ENCODE measurements at regions of chr7 and their contacts with region 1.

Region 1: DNA sequence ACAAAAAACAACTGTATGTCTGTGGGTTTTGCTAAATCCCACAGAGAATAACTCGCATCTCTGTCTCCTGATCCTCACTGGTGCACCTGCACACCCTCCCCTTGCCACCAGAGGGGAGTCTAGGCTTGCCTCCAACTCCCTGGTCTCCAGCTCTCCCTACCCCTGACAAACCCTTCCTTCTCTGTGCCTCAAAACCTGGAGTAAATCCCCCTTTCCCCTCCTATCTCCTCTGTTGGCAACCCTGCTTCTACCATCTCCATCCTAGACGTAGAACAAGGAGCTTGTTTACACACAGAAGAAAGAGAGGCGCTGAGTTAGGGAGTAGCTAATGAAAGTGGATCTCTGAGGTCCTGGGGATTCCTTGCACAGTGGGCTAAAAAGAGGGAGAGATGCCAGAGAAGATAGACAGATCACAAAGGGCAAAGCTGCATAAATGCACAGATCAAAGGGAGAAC is 6.0 kb downstream of the MBLAC1 start:
- DNase-seq: peak; percentile 78

Region 2: DNA sequence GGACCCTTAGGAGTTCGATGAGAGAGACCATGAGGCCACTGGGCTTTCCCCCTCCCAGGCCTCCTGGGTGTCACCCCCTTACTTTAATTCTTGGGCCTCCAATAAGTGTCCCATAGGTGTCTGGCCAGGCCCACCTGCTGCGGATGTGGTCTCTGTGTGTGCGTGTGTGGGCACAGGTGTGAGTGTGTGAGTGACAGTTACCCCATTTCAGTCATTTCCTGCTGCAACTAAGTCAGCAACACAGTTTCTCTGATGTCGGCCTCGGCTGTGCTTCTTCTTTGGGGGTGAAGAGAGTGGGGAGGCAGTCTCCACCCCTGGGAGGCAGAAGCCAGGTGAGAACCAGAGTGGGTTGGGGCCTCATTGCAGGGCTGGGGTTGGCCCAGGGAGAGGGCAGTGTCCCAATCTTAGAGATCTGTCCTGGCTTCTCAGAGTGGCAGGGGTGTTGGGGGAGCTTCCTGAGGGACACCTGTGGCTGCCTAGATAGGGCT is 88.6 kb after region 1 on chr7:
- CTCF ChIA-PET with region 1: interaction called, 13 read pairs
- POLR2A ChIA-PET with region 1: interaction called, 3 read pairs
- DNase-seq: no peak

Region 3: GRCh38 chr7:100271716-100272537 is 139.2 kb after region 1 on chr7:
- CTCF ChIA-PET with region 1: no interaction called
- POLR2A ChIA-PET with region 1: no interaction called
- DNase-seq: peak; percentile 91

Measured in HEK293T (cell line).